Activated naive CD4-positive, alpha-beta T cell treated with anti-CD3 and anti-CD28 coated beads for 36 hours (primary cell): ENCODE measurements at regions of chr14 and their contacts with region 1.

Region 1: GRCh38 chr14:77053046-77053841 is 24.7 kb upstream of the IRF2BPL start:
- DNase-seq: peak; percentile 86
- H3K4me3 Mint-ChIP-seq: no peak overlapping the region
- H3K27ac Mint-ChIP-seq: no peak overlapping the region
- H3K4me1 Mint-ChIP-seq: peaks cover 21% of the 10 kb centered on the region
- H3K27me3 Mint-ChIP-seq: no peaks in the 10 kb centered on the region

Region 2: DNA sequence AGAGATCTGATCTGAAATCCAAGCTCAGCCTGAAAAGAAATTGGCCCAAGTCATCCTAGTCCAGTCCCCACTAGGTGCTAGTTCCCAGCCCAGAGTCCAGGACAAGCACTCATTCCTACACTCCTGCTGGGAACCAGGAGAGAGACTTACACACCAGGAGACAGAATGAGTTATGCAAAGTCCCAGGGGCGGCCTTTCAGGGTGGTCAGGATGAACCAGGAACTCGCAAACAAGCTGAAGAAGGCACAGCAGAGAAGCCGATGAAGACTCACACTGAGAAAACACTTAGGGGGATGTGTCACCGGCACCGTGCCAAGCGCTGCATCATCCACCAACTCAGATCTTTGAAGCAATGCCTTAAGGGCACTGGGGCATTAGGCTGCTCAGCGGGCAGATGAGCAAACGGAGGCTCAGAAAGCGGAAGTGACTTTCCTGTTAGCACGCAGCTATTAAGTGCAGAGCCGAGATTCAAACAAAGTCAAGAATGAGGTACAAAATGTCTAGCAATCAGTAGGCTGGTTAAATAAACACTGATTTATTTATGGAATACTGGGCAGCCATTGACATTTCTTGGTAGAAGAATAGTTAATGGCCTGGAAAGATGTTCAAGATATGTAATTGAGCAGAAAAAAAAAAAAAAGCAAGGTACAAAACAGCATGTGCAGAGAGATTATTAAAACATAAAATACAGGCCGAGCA is 148.4 kb before region 1 on chr14:
- CTCF ChIA-PET with region 1: interaction called, 299 read pairs
- intact Hi-C with region 1: loop called (anchors 1 kb)
- DNase-seq: peak; percentile 95
- H3K4me3 Mint-ChIP-seq: no peak overlapping the region
- H3K27ac Mint-ChIP-seq: no peak overlapping the region
- H3K4me1 Mint-ChIP-seq: peaks cover 30% of the 10 kb centered on the region
- H3K27me3 Mint-ChIP-seq: no peaks in the 10 kb centered on the region

Region 3: GRCh38 chr14:76937181-76938091 is 115.8 kb before region 1 on chr14:
- CTCF ChIA-PET with region 1: interaction called, 19 read pairs
- intact Hi-C with region 1: no loop called
- DNase-seq: no peak
- H3K4me3 Mint-ChIP-seq: no peak overlapping the region
- H3K27ac Mint-ChIP-seq: no peak overlapping the region
- H3K4me1 Mint-ChIP-seq: peaks cover 13% of the 10 kb centered on the region
- H3K27me3 Mint-ChIP-seq: no peaks in the 10 kb centered on the region

Region 4: DNA sequence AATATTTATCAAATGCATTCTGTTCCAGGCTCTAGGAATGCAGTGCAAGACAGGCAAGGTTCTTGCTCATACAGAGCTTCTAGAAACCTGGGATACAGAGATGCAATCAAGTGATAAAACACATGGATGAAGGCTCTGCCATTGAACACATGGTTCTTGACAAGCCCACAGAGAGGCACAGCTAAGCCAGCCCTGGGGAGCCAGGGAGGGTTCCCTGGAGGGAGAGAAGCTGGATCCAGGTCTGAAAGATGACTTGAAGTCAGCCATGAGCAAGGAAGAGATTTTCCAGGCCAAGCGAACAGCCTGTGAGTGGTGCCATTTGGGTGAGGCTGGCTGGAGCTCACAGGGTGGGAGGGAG is 91.0 kb before region 1 on chr14:
- CTCF ChIA-PET with region 1: interaction called, 11 read pairs
- intact Hi-C with region 1: no loop called
- DNase-seq: no peak
- H3K4me3 Mint-ChIP-seq: peak overlapping the region; percentile 68
- H3K27ac Mint-ChIP-seq: peak overlapping the region; percentile 98
- H3K4me1 Mint-ChIP-seq: peaks cover 90% of the 10 kb centered on the region
- H3K27me3 Mint-ChIP-seq: no peaks in the 10 kb centered on the region

Region 5: DNA sequence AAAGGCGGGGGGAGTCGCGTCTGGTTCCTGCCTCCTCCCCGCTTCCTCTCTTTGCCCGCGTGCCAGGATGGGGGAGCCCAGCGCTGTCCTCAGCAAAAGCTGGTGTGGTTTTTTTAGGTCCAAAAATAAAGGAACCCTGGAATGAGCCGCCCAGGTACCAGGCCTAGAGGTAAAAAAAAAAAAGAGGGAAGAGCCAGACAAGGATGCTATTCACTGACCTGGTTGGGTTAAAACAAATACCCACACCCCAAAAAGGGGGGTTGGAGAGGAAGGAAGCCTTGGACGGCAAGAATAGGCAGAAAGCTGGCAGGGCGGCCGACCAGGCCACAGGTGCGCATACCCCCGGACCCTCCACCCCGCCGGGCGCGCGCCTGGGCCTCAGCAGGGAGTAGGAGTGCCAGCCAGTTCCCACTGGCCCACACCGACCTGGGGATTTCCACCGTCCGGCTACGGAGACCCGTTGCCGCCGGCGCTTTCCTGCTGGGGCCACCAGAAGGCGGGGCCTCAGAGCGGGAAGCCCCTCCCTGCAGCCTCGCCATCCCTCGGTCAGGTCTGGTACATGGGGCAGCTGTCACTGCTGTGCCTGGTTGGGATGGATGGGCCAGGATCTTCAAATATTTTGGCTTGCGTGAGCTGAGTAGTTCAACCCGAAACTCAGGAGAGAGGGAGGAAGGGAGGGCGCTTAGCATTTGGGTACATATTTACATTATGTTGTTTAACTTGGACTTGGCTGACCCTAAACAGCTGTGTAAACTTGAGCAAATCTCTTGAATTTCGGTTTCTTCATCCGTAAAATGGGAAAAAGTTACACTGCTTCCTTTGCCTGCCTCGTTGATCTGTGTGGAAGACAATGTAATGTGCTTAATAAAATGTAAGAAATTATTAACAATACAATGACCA is 19.4 kb before region 1 on chr14:
- CTCF ChIA-PET with region 1: interaction called, 14 read pairs
- intact Hi-C with region 1: no loop called
- DNase-seq: peak; percentile 93
- H3K4me3 Mint-ChIP-seq: peak overlapping the region; percentile 83
- H3K27ac Mint-ChIP-seq: peak overlapping the region; percentile 95
- H3K4me1 Mint-ChIP-seq: peaks cover 73% of the 10 kb centered on the region
- H3K27me3 Mint-ChIP-seq: no peaks in the 10 kb centered on the region

Region 6: DNA sequence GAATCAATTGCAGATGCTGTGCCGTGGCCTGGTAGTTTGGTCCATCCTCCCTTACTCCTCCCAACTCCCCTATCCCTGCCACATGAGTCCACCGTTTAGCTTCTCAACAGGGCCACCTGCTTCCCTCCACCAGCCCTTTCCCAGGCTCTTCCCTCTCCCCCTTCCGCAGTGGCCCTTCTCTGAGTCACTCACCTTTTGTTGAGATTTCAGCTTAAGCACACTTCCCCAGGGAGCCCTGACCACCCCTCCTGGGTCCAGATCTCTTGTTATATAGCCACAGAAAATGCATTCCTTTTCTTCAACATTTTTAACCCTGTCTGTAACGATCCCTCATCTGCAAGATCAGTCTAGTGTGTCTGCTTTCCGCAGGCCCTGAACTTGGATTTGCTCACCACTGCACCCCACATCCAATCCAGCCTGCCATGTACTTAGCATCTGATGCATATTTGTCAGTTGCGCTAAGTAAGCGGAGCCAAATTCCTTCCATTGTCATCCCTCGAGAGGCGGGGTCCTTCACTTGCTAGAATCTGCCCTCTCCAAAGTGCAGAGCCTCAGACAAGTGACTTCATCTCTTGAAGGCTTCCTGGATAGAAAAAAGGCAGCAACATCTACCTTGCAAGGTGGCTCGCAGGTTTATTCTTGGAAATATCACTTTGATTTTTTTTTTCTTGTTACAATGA is 169.4 kb after region 1 on chr14:
- CTCF ChIA-PET with region 1: no interaction called
- intact Hi-C with region 1: no loop called
- DNase-seq: no peak
- H3K4me3 Mint-ChIP-seq: no peak overlapping the region
- H3K27ac Mint-ChIP-seq: no peak overlapping the region
- H3K4me1 Mint-ChIP-seq: no peaks in the 10 kb centered on the region
- H3K27me3 Mint-ChIP-seq: no peaks in the 10 kb centered on the region

Region 7: GRCh38 chr14:77275601-77276017 is 222.4 kb after region 1 on chr14:
- CTCF ChIA-PET with region 1: no interaction called
- intact Hi-C with region 1: no loop called
- DNase-seq: no peak
- H3K4me3 Mint-ChIP-seq: no peak overlapping the region
- H3K27ac Mint-ChIP-seq: no peak overlapping the region
- H3K4me1 Mint-ChIP-seq: peaks cover 2% of the 10 kb centered on the region
- H3K27me3 Mint-ChIP-seq: peaks cover 14% of the 10 kb centered on the region

Region 8: DNA sequence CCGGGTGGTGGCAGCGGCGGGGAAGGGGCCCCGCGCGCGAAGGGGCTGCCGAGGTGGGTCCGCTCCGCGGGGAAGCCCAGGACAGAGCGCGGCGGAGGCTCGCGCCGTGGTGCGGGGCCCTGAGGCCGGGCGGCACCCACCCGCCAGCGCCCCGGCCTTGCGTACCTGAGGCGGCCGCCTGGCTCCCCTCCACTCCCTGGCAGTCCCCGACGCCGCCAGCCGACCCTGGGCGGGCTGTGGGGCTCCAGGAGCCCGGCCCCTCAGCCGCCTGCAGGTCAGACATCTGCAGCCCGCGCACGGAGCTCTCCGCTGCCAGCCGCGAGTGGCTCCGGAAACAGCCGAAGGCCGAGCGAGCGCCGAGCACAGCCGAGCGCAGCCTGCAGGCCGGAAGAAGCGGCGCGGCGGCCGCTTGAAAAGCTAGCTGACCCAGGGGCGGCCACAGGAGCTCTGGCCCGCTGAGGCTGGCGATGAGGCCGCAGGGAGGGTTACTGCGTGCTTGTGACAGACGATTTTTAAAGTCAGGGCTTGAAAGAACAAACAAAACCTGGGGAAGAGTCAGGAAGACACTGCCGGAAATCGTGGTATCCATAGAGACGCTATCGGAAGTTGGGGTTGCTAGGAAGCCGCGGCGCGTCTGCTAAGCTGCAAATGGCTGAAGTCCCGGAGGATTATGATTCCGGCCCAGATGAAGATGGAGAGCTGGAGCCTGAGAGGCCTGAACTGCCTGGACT is 323.7 kb after region 1 on chr14 and contains the starts of genes SAMD15 and TMED8:
- CTCF ChIA-PET with region 1: no interaction called
- intact Hi-C with region 1: no loop called
- DNase-seq: peak; percentile 84
- H3K4me3 Mint-ChIP-seq: peak within 1 kb of the TSS; percentile 90
- H3K27ac Mint-ChIP-seq: peak within 1 kb of the TSS; percentile 80
- H3K4me1 Mint-ChIP-seq: peaks cover 38% of the 10 kb centered on the region
- H3K27me3 Mint-ChIP-seq: no peaks in the 10 kb centered on the region
- total RNA-seq, gene SAMD15: 0.10 TPM in 1 of 2 experiments, not detected in the other
- total RNA-seq, gene TMED8: 21.5 to 21.7 TPM